Body of pancreas (tissue), 4 donors: ENCODE measurements at regions of chr9 and their contacts with region 1.

Region 1: DNA sequence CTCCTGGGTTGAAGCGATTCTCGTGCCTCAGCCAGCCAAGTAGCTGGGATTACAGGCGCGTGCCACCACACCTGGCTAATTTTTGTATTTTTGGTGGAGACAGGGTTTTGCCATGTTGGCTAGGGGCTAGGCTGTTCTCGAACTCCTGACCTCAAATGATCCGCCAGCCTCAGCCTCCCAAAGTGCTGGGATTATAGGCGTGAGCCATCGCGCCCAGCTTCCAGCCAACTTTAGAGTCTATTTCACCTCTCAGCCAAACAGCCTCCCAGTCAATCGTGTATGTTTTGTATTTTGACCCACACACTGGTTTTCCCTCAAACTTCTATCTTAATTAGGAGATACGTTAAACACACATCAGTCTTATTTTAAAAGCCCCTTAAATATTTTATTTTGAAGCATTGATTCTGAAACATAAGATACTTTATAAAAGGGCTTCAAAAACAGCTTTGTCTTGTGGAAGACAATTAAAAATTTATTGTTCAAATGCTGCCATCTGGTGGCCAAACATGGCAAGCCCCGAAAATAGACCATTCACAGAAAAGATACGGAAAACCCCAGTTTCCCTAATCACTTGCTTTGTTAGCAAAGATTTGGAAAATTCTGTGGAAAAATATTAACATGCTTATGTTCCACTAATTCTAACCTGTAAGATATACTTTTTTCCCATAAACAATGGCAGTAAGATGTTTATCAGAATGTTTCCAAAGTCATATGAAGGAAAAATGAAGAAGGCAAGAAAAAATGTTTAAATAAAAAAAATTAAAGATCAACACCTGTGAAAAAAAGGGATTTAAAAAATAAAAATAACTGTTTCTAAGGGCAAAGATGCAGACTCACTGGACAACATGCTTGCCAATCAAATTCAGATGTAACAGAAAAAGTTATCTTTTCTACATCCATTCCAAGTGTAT is 33.1 kb downstream of the APTX start:
- DNase-seq: peak; percentile 54 to 73 (median 63)
- ATAC-seq: no peak
- H3K4me3 ChIP-seq: no peak overlapping the region
- H3K27ac ChIP-seq: no peak overlapping the region
- H3K4me1 ChIP-seq: no peaks in the 10 kb centered on the region
- H3K27me3 ChIP-seq: no peaks in the 10 kb centered on the region
- CTCF ChIP-seq: peak in 6 of 7 experiments; percentile 65 to 96 (median 71)
- POLR2A ChIP-seq: no peak

Region 2: DNA sequence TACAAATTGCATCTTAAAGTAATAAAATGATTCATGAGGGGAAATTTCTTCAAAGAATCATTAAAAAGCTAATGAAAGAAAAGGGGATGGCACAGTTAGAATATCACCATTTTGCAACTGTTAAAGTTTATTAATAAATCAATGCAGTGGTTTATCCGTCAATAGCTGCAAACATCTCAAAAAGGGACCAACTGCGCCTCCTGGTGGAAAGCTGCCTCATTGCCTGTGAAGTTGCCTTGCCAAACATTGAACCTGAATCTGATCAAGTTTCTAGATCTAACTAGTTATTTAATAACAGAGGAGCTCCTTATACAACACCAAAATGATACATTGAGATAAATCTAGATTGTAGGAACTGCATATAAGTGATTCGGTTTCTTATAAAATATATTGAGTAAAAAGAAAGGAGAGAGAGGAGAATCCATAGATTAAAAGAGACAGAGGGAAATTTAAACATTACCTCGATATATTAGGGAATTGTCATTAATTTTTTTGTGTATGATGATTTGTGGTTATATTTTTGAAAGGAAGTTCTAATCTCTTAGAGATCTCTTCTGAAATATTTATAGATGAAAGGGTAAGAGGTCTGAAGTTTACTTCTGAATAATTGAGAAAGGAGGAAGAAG is 388.5 kb before region 1 on chr9:
- intact Hi-C with region 1: loop called (anchors 10 kb)
- DNase-seq: peak; percentile 67 to 82 (median 74)
- ATAC-seq: peak; percentile 58
- H3K4me3 ChIP-seq: no peak overlapping the region
- H3K27ac ChIP-seq: no peak overlapping the region
- H3K4me1 ChIP-seq: no peaks in the 10 kb centered on the region
- H3K27me3 ChIP-seq: no peaks in the 10 kb centered on the region
- CTCF ChIP-seq: peak; percentile 73 to 92 (median 78)
- POLR2A ChIP-seq: no peak

Region 3: DNA sequence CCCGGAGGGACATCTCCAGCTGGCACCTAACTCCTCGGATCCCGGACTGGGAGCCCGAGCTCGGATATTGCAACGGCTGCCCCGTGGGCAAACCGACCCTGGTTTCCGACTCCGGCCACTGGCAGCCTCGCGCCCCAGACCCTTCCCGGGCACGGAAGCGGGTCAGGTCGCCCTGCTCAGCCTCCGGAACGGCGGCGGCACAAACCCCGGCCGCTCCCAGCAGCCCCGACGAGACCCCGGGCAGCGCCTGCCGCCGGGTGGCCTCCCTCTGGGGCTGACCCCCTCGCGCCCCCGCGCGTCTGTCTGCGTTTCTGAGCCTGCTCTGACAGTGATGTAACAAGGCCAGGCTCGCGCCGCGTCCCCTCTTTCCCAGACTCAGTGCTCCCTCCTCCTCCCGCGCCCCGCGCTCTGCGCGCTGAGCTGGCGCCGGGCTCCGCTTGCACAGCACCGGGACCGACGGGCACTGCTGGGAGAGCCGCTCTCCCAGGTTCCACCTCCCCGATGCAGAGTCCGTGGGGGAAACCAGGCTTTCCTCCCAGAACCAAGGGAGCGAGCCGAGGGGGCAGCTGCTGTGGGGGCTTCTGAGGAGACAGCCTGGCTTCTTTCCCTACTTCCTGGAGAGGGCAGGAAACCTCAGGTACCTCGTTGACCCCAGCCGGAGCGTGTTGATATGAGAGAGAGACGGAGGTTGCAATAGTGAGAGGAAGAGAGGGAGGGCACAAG is 185.0 kb before region 1 on chr9 and contains the start of gene TMEM215:
- intact Hi-C with region 1: no loop called
- DNase-seq: no peak
- ATAC-seq: no peak
- H3K4me3 ChIP-seq: no peak within 1 kb of the TSS
- H3K27ac ChIP-seq: no peak within 1 kb of the TSS
- H3K4me1 ChIP-seq: peaks cover 10% of the 10 kb centered on the region
- H3K27me3 ChIP-seq: no peaks in the 10 kb centered on the region
- CTCF ChIP-seq: no peak
- POLR2A ChIP-seq: no peak
- total RNA-seq, gene TMEM215: not detected